ENCODE measurements at regions of chr6 and their contacts with region 1.

Region 1: GRCh38 chr6:129875610-129876520 is 14.8 kb upstream of the TMEM244 start:
- DNase-seq: no peak
- ATAC-seq: no peak
- H3K4me3 ChIP-seq: no peak overlapping the region
- H3K4me3 Mint-ChIP-seq: peak overlapping the region in 2 of 3 donors; percentile 28 to 34
- H3K27ac ChIP-seq: peak overlapping the region; percentile 51
- H3K27ac Mint-ChIP-seq: peak overlapping the region; percentile 36 to 60
- H3K4me1 ChIP-seq: peaks cover 0 to 4% of the 10 kb centered on the region in 2 experiments
- H3K4me1 Mint-ChIP-seq: peaks cover 7 to 14% (median 14%) of the 10 kb centered on the region in 3 donors
- H3K27me3 ChIP-seq: no peaks in the 10 kb centered on the region
- H3K27me3 Mint-ChIP-seq: peaks cover 0 to 5% of the 10 kb centered on the region in 2 donors

Region 2: DNA sequence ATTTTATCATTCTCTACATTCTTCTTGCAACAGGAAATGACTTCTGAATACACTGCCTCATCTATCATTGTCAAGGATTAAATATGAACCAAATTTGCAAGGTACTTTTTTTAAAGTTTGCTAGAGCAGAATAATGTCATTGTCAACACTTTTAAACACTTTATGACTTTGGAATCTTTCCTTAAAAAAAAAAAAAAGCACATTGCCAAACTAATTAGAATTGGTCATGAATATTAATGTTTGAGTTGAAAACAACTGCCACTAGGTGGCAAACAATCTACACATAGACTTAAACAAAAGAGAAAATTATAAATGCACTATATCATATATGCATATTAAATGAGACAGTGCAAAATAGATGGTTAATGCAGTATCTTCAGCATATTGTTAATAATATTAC is 17.8 kb after region 1 on chr6:
- CTCF ChIA-PET with region 1: interaction called in 1 of 2 experiments, 10 read pairs
- POLR2A ChIA-PET with region 1: interaction called in 1 of 2 experiments, 4 read pairs
- DNase-seq: peak in 1 of 35 experiments; percentile 50
- ATAC-seq: no peak
- H3K4me3 ChIP-seq: no peak overlapping the region
- H3K4me3 Mint-ChIP-seq: no peak overlapping the region
- H3K27ac ChIP-seq: no peak overlapping the region
- H3K27ac Mint-ChIP-seq: no peak overlapping the region
- H3K4me1 ChIP-seq: no peaks in the 10 kb centered on the region
- H3K4me1 Mint-ChIP-seq: peaks cover 0 to 4% (median 3%) of the 10 kb centered on the region in 3 donors
- H3K27me3 ChIP-seq: no peaks in the 10 kb centered on the region
- H3K27me3 Mint-ChIP-seq: peaks cover 3% of the 10 kb centered on the region in 2 donors

Region 3: DNA sequence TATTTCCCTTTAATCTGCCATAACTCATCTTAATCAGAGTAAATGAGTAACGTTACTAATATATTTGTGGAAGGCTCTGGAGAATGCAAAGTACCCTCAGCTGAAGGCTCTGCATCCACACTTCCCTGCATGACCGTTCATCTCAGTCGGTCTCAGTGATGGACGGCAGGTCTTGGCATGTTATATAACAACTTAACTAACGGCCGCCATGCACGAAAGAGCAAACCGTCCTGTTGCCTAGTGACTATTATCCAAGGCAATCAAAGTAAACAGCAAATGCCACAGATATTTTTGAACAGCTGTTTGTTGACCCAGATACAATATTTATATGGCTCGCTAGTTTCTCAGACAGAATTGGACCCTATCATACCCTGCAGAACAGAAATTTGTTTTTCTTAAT is 756.4 kb after region 1 on chr6:
- CTCF ChIA-PET with region 1: interaction called in 1 of 2 experiments, 14 read pairs
- POLR2A ChIA-PET with region 1: no interaction called
- DNase-seq: no peak
- ATAC-seq: no peak
- H3K4me3 ChIP-seq: no peak overlapping the region
- H3K4me3 Mint-ChIP-seq: no peak overlapping the region
- H3K27ac ChIP-seq: no peak overlapping the region
- H3K27ac Mint-ChIP-seq: no peak overlapping the region
- H3K4me1 ChIP-seq: no peaks in the 10 kb centered on the region
- H3K4me1 Mint-ChIP-seq: peaks cover 3 to 6% (median 5%) of the 10 kb centered on the region in 3 donors
- H3K27me3 ChIP-seq: no peaks in the 10 kb centered on the region
- H3K27me3 Mint-ChIP-seq: no peaks in the 10 kb centered on the region

Measured in T-cell (primary cell).